ENCODE measurements at regions of chrX and their contacts with region 1.

Region 1: GRCh38 chrX:57821703-57822375 is 88.4 kb downstream of the ZXDA start:
- DNase-seq: peak; percentile 36
- H3K4me3 ChIP-seq: no peak overlapping the region
- H3K27ac ChIP-seq: no peak overlapping the region
- H3K4me1 ChIP-seq: no peaks in the 10 kb centered on the region
- H3K27me3 ChIP-seq: no peaks in the 10 kb centered on the region
- CTCF ChIP-seq: peak; percentile 56

Region 2: DNA sequence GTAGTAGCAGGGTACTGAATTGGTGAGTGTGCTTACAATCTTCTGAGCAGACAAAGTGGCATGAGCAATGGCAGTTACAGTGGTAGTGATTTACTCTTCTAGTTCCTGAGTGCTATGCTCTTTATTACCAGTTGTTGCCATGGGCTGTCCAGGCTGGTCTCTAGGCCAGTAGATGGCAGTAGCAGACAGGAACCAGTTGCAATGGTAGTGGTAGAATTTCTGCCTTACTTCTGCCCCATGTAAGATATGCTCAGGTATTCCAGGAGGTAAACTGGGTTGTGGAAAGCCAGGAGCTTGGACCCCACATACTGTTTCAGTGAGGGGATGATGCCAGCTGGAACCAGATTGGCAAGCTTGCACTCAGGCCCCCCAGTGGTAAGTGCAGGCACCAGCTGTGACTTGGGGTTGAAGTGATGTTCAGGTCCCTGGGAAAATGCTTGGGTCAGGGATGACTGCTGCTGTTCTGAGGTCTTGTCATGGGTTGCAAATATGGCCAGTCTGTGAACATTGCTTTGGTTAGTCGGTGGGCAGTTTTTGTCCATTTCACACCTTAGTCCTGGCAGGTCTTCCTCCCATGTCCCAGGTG is 293.1 kb before region 1 on chrX:
- intact Hi-C with region 1: no loop called
- DNase-seq: peak; percentile 18
- H3K4me3 ChIP-seq: no peak overlapping the region
- H3K27ac ChIP-seq: no peak overlapping the region
- H3K4me1 ChIP-seq: no peaks in the 10 kb centered on the region
- H3K27me3 ChIP-seq: peaks cover 6% of the 10 kb centered on the region
- CTCF ChIP-seq: no peak

Region 3: DNA sequence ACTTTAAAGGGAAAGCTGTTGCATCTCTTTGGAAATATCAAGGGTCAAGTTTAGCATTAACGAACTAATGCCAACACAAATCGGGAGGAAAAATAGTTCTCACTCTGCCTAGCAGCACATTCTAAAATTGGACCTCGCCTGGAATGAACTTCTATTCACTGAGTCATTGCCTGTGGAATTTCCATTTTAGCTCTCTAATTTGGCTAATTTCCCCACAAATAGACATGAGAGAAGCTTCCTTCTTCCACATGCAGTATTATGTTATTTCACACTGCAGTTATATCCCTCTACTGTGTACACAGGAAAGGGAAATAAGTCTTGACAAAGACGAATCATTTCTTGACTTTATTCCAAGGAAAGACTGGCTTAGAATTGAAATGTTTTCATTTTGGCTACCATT is 79.1 kb after region 1 on chrX:
- intact Hi-C with region 1: no loop called
- DNase-seq: no peak
- H3K4me3 ChIP-seq: no peak overlapping the region
- H3K27ac ChIP-seq: no peak overlapping the region
- H3K4me1 ChIP-seq: no peaks in the 10 kb centered on the region
- H3K27me3 ChIP-seq: no peaks in the 10 kb centered on the region
- CTCF ChIP-seq: no peak

Region 4: GRCh38 chrX:57918750-57919436 is 97.1 kb after region 1 on chrX:
- intact Hi-C with region 1: loop called (anchors 5 kb)
- DNase-seq: peak; percentile 26
- H3K4me3 ChIP-seq: no peak overlapping the region
- H3K27ac ChIP-seq: no peak overlapping the region
- H3K4me1 ChIP-seq: no peaks in the 10 kb centered on the region
- H3K27me3 ChIP-seq: no peaks in the 10 kb centered on the region
- CTCF ChIP-seq: peak; percentile 42

Region 5: GRCh38 chrX:58025979-58026378 is 204.1 kb after region 1 on chrX:
- intact Hi-C with region 1: loop called (anchors 5 kb)
- DNase-seq: peak; percentile 39
- H3K4me3 ChIP-seq: no peak overlapping the region
- H3K27ac ChIP-seq: no peak overlapping the region
- H3K4me1 ChIP-seq: no peaks in the 10 kb centered on the region
- H3K27me3 ChIP-seq: no peaks in the 10 kb centered on the region
- CTCF ChIP-seq: peak; percentile 63